ENCODE measurements at regions of chr19 and their contacts with region 1.

Region 1: DNA sequence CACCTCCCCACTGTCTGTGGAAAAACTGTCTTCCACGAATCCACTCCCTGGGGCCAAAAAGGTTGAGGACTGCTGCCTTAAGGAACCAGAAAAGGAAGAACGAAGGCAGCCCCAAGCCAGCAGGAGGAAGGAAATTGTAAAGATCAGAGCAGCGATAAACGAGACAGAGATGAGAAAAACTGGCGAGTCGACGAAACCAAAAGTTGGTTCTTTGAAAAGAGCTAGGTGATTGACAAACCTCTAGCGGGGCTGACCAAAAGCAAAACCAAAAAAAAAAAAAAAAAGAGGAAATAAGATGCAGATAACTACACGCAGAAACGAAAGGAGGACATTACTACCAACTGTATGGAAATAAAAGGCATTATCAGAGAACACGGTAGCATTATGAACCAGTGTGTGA is 76.9 kb downstream of the GADD45B start:
- DNase-seq: no peak
- ATAC-seq: no peak; the same call in 1 of the 2 replicates
- H3K4me3 ChIP-seq: peak overlapping the region; percentile 31 to 53
- H3K27ac ChIP-seq: peak overlapping the region; percentile 92
- H3K4me1 ChIP-seq: peaks cover 27% of the 10 kb centered on the region
- H3K27me3 ChIP-seq: no peaks in the 10 kb centered on the region
- CTCF ChIP-seq: no peak

Region 2: GRCh38 chr19:2507109-2507508 is 45.8 kb before region 1 on chr19:
- CTCF ChIA-PET with region 1: no interaction called
- POLR2A ChIA-PET with region 1: interaction called, 10 read pairs
- in situ Hi-C with region 1: no loop called
- intact Hi-C with region 1: no loop called
- DNase-seq: peak; percentile 77
- ATAC-seq: peak; percentile 72
- H3K4me3 ChIP-seq: peak overlapping the region in 1 of 2 experiments; percentile 30; a peak in 2 of 4 replicates
- H3K27ac ChIP-seq: peak overlapping the region; percentile 83
- H3K4me1 ChIP-seq: peaks cover 7% of the 10 kb centered on the region; the same call in 1 of the 2 replicates
- H3K27me3 ChIP-seq: no peaks in the 10 kb centered on the region
- CTCF ChIP-seq: no peak

Region 3: GRCh38 chr19:2602391-2603181 is 49.7 kb after region 1 on chr19:
- CTCF ChIA-PET with region 1: interaction called, 10 read pairs
- POLR2A ChIA-PET with region 1: no interaction called
- in situ Hi-C with region 1: no loop called
- intact Hi-C with region 1: no loop called
- DNase-seq: no peak
- ATAC-seq: peak; percentile 74
- H3K4me3 ChIP-seq: peak overlapping the region; percentile 2 to 29; a peak in 2 of 4 replicates
- H3K27ac ChIP-seq: peak overlapping the region; percentile 67
- H3K4me1 ChIP-seq: peaks cover 3% of the 10 kb centered on the region; the same call in 1 of the 2 replicates
- H3K27me3 ChIP-seq: no peaks in the 10 kb centered on the region
- CTCF ChIP-seq: no peak

Region 4: GRCh38 chr19:2610637-2611482 is 58.0 kb after region 1 on chr19:
- CTCF ChIA-PET with region 1: interaction called, 10 read pairs
- POLR2A ChIA-PET with region 1: no interaction called
- in situ Hi-C with region 1: no loop called
- intact Hi-C with region 1: no loop called
- DNase-seq: no peak
- ATAC-seq: peak; percentile 93
- H3K4me3 ChIP-seq: peak overlapping the region; percentile 17 to 45; a peak in 3 of 4 replicates
- H3K27ac ChIP-seq: peak overlapping the region; percentile 86
- H3K4me1 ChIP-seq: peaks cover 14% of the 10 kb centered on the region
- H3K27me3 ChIP-seq: no peaks in the 10 kb centered on the region
- CTCF ChIP-seq: peak; percentile 92

Region 5: GRCh38 chr19:3163230-3163886 is 610.5 kb after region 1 on chr19:
- CTCF ChIA-PET with region 1: no interaction called
- POLR2A ChIA-PET with region 1: no interaction called
- in situ Hi-C with region 1: no loop called
- intact Hi-C with region 1: no loop called
- DNase-seq: no peak
- ATAC-seq: peak; percentile 93
- H3K4me3 ChIP-seq: no peak overlapping the region
- H3K27ac ChIP-seq: no peak overlapping the region
- H3K4me1 ChIP-seq: no peaks in the 10 kb centered on the region; the same call in 1 of the 2 replicates
- H3K27me3 ChIP-seq: no peaks in the 10 kb centered on the region
- CTCF ChIP-seq: peak; percentile 93

Measured in Panc1 (cell line).